ENCODE measurements at regions of chr11 and their contacts with region 1.

Region 1: GRCh38 chr11:61899146-61899841 is 7.9 kb upstream of the FADS3 start:
- H3K4me3 Mint-ChIP-seq: no peak overlapping the region
- H3K27ac Mint-ChIP-seq: no peak overlapping the region
- H3K4me1 Mint-ChIP-seq: peaks cover 23% of the 10 kb centered on the region
- H3K27me3 Mint-ChIP-seq: peaks cover 14% of the 10 kb centered on the region

Region 2: GRCh38 chr11:61816736-61817455 is 82.4 kb before region 1 on chr11 and contains the start of gene FADS1:
- intact Hi-C with region 1: no loop called
- H3K4me3 Mint-ChIP-seq: peak within 1 kb of the TSS; percentile 92
- H3K27ac Mint-ChIP-seq: peak within 1 kb of the TSS; percentile 94
- H3K4me1 Mint-ChIP-seq: peaks cover 36% of the 10 kb centered on the region
- H3K27me3 Mint-ChIP-seq: no peaks in the 10 kb centered on the region

Region 3: DNA sequence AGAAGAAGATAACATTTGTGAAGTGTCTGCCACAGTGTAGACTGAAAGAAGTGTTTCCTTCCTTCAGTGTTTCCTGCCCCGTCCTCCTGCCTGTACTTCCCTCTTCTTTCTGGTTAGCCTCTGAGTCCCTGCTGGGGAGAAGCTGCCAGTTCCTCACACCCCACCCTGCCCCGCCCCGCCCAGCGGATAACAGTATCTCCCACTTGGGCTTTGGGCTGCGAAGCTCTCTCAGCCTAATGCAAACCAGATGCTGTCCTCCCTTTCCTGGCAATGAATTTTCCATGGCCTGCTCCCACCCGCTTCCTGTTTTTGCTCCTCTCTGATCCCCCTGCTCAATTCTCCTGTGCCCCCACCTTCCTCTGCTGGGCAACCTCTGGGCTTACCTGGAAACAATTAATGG is 23.2 kb after region 1 on chr11:
- intact Hi-C with region 1: loop called (anchors 1 kb)
- H3K4me3 Mint-ChIP-seq: peak overlapping the region; percentile 41
- H3K27ac Mint-ChIP-seq: peak overlapping the region; percentile 69
- H3K4me1 Mint-ChIP-seq: peaks cover 71% of the 10 kb centered on the region
- H3K27me3 Mint-ChIP-seq: peaks cover 44% of the 10 kb centered on the region

Region 4: GRCh38 chr11:61947486-61948210 is 48.4 kb after region 1 on chr11:
- intact Hi-C with region 1: loop called (anchors 1 kb)
- H3K4me3 Mint-ChIP-seq: no peak overlapping the region
- H3K27ac Mint-ChIP-seq: peak overlapping the region; percentile 27
- H3K4me1 Mint-ChIP-seq: peaks cover 26% of the 10 kb centered on the region
- H3K27me3 Mint-ChIP-seq: peaks cover 14% of the 10 kb centered on the region

Region 5: DNA sequence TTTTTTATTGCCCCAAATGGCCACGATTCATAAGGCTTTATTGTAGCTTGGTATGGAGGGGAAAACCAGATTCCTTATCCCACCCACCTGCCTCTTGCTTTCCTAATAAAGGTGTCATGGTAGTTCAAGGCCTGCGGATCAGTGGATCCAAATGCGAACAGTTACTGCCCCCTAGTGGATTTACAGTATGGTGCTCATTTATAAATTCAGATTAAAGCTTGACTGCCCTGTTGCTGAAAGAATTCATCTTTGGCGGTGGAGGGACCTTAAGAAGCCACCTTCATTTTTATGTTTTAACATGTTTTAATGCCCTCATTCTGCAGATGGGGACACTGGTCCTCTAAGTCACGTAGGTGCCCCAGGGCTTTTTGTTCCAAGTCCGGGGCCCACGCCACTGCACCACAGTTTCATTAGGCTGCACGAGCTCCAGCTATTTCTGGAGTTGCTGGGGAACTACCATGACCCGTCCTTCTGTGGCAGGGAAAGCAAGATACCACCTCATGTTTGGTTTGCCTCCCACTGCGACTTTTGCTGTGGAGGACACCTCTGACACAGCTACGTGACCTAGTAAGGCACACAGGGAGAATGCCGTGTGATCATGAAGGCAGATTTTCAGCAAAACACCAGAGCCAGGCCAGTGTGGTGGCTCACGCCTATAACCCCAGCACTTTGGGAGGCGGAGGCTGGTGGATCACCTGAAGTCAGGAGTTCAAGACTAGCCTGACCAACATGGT is 208.9 kb after region 1 on chr11:
- intact Hi-C with region 1: loop called (anchors 2 kb)
- H3K4me3 Mint-ChIP-seq: no peak overlapping the region
- H3K27ac Mint-ChIP-seq: no peak overlapping the region
- H3K4me1 Mint-ChIP-seq: peaks cover 18% of the 10 kb centered on the region
- H3K27me3 Mint-ChIP-seq: peaks cover 12% of the 10 kb centered on the region

Measured in dendritic cell treated with granulocyte-macrophage colony-stimulating factor and Interleukin-4, amounts not matched to agents 40 ng/mL and 50 ng/mL, for 4 days (primary cell).